A549 (cell line): ENCODE measurements at regions of chr6 and their contacts with region 1.

Region 1: DNA sequence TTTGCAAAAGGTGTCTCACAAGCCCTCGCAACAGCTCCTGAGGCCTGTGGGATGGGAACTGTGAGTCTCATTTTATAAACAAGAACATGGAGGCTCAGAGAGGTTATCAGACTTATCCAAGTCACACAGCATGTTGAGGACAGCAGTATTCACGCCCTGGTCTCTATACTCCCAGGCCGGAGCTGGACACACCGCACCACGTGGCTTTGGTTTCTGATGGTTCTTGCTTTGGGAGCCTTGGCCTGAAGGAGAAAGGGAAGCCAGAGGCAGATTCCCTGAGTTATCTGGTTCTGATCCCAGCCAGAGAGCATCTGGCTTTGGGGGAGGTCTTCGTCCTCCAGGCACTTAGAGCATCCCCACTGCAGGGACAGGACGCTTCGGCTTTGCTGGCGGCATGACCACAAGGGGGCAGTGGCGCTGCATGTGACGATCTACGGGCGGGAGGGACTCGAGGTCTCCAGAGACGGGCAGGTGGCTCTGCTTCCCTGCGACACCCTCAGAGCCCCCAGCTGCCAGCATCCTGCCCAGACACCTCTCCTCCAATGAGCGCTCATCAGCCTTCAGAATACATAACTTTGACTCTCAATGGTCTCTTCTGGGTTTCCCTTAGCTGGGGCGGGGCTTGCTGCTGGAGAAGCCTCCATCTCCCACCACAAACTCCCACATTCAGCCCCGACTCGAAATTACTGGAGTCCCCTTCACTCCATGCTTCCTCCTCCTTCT is 51.4 kb upstream of the SAYSD1 start:
- DNase-seq: peak; percentile 61 to 68
- ATAC-seq: peak; percentile 93 to 98
- H3K4me3 ChIP-seq: no peak overlapping the region
- H3K27ac ChIP-seq: no peak overlapping the region
- H3K4me1 ChIP-seq: peaks cover 9% of the 10 kb centered on the region; the same call in 2 of the 3 replicates
- CTCF ChIP-seq: peak; percentile 73
- EP300 ChIP-seq: no peak
- POLR2A ChIP-seq: no peak
- RAD21 ChIP-seq: peak; percentile 88 to 94

Region 2: GRCh38 chr6:39100358-39100757 is 66.0 kb before region 1 on chr6:
- CTCF ChIA-PET with region 1: no interaction called
- POLR2A ChIA-PET with region 1: no interaction called
- DNase-seq: no peak
- ATAC-seq: no peak
- H3K4me3 ChIP-seq: no peak overlapping the region
- H3K27ac ChIP-seq: no peak overlapping the region
- H3K4me1 ChIP-seq: no peaks in the 10 kb centered on the region
- CTCF ChIP-seq: no peak
- EP300 ChIP-seq: no peak
- POLR2A ChIP-seq: no peak
- RAD21 ChIP-seq: no peak

Region 3: DNA sequence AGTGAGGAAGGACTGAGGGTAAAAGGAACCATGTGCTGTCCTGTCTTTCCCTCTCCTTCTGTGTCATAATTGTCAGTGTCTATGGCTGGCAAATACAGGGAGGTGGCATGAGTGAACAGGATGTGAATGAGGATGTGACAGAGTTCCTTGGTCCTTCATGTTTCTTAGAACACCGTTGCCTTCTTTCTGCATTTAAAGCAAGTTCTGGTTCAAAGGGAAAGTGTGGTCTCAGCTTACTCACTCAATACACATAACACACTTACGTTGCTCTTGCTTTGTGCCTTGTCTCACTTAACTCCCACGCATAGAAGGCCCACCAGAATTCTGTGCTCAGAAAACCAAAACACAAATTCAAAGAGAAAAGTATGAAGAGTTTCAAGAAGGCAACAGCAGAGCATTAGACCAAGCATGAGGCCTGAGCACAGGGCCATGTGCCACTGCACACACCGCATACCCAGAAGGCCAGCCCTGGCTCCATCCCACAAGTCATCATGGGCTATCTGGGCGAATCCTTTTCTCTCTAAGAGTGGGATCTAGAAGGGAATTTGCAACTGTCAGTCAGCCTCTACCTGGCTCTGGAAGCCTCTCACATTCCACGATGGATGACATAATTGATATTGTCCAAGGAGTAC is 12.5 kb before region 1 on chr6:
- CTCF ChIA-PET with region 1: interaction called, 17 read pairs
- POLR2A ChIA-PET with region 1: no interaction called
- DNase-seq: no peak
- ATAC-seq: no peak
- H3K4me3 ChIP-seq: no peak overlapping the region
- H3K27ac ChIP-seq: no peak overlapping the region
- H3K4me1 ChIP-seq: no peaks in the 10 kb centered on the region
- CTCF ChIP-seq: no peak
- EP300 ChIP-seq: no peak
- POLR2A ChIP-seq: no peak
- RAD21 ChIP-seq: no peak

Region 4: DNA sequence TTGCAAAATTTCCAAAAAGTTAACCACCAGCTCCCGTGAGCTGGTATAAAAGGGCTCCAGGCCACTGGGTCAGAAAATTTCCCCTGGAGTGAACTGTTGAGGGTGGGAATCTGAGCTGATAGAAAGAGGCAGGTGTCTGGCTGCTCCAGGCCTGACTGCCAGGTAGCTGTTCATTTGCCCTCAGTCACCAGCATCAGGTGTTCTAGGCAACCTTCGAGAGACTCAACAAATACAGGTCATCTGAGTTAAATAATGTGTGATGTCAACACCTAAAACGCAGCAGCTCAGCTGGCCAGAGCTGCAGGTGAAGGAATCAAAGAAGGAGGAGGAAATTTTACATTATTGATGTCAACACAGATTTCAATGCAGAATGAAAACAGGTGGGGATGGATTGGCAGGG is 16.3 kb after region 1 on chr6:
- CTCF ChIA-PET with region 1: interaction called, 14 read pairs
- POLR2A ChIA-PET with region 1: no interaction called
- DNase-seq: no peak
- ATAC-seq: no peak
- H3K4me3 ChIP-seq: no peak overlapping the region
- H3K27ac ChIP-seq: no peak overlapping the region
- H3K4me1 ChIP-seq: peaks cover 16% of the 10 kb centered on the region
- CTCF ChIP-seq: no peak
- EP300 ChIP-seq: no peak
- POLR2A ChIP-seq: no peak
- RAD21 ChIP-seq: no peak

Region 5: GRCh38 chr6:39196673-39197091 is 30.3 kb after region 1 on chr6:
- CTCF ChIA-PET with region 1: interaction called, 10 read pairs
- POLR2A ChIA-PET with region 1: no interaction called
- DNase-seq: no peak
- ATAC-seq: no peak
- H3K4me3 ChIP-seq: no peak overlapping the region
- H3K27ac ChIP-seq: no peak overlapping the region
- H3K4me1 ChIP-seq: 0 out of 3 replicates have a peak, but pooled peaks cover 6% of the 10 kb centered on the region
- CTCF ChIP-seq: no peak
- EP300 ChIP-seq: no peak
- POLR2A ChIP-seq: no peak
- RAD21 ChIP-seq: no peak

Region 6: GRCh38 chr6:39302669-39303424 is 136.5 kb after region 1 on chr6:
- CTCF ChIA-PET with region 1: interaction called, 171 read pairs
- POLR2A ChIA-PET with region 1: no interaction called
- DNase-seq: peak; percentile 71 to 78
- ATAC-seq: peak; percentile 89 to 96
- H3K4me3 ChIP-seq: 0 out of 3 replicates have a peak overlapping the region, but pooled peaks have one; percentile 23
- H3K27ac ChIP-seq: peak overlapping the region; percentile 40 to 55; a peak in 3 of 6 replicates
- H3K4me1 ChIP-seq: 0 out of 3 replicates have a peak, but pooled peaks cover 3% of the 10 kb centered on the region
- CTCF ChIP-seq: peak; percentile 71
- EP300 ChIP-seq: no peak
- POLR2A ChIP-seq: no peak
- RAD21 ChIP-seq: peak; percentile 89 to 90

Region 7: GRCh38 chr6:39309942-39310531 is 143.7 kb after region 1 on chr6:
- CTCF ChIA-PET with region 1: interaction called, 171 read pairs
- POLR2A ChIA-PET with region 1: no interaction called
- DNase-seq: peak; percentile 64 to 74
- ATAC-seq: peak; percentile 83 to 94
- H3K4me3 ChIP-seq: no peak overlapping the region
- H3K27ac ChIP-seq: no peak overlapping the region
- H3K4me1 ChIP-seq: no peaks in the 10 kb centered on the region
- CTCF ChIP-seq: peak; percentile 78
- EP300 ChIP-seq: no peak
- POLR2A ChIP-seq: no peak
- RAD21 ChIP-seq: peak; percentile 83 to 89